B cell (primary cell): ENCODE measurements at regions of chr19 and their contacts with region 1.

Region 1: GRCh38 chr19:56066152-56067023 is 54.7 kb downstream of the ZNF787 start:
- DNase-seq: peak; percentile 77
- ATAC-seq: peak; percentile 67
- H3K4me3 ChIP-seq: peak overlapping the region in 4 of 5 experiments; percentile 2 to 42 (median 36)
- H3K4me3 Mint-ChIP-seq: peak overlapping the region; percentile 71
- H3K27ac ChIP-seq: no peak overlapping the region
- H3K27ac Mint-ChIP-seq: no peak overlapping the region
- H3K4me1 ChIP-seq: peaks cover 9 to 10% of the 10 kb centered on the region in 2 donors
- H3K4me1 Mint-ChIP-seq: peaks cover 11% of the 10 kb centered on the region
- H3K27me3 ChIP-seq: peaks cover 0 to 7% (median 3%) of the 10 kb centered on the region in 4 experiments
- H3K27me3 Mint-ChIP-seq: peaks cover 36% of the 10 kb centered on the region
- CTCF ChIP-seq: peak; percentile 97

Region 2: DNA sequence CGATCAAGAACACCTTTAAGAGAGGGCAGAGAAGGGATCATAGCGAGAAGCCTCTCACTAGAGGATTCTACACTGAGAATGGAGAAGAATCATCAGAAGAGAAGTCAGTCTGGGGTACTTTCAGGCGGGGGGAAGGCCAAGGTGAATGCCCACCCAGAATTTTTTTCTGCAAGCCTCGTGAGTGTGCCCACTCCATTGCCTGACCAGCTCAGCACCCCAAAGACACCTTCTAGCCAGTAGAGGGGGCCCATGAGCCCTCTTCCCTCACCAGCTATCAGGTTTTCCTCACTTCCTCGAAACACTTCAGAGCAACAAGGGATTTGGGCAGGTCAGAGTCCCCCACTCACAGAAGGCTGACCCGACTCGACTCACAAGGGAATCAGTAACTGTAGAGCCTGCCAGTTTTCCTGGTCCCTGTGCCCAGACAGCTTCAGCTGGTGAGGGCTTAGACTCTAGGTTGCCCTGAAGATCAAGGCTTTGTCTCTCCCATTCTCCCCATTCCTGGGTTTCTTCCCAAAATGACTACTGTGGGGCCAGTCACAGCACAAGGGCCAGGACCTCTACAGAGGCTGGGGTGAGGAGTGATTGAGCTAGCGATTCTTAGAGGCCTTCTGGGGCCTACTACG is 152.6 kb before region 1 on chr19:
- CTCF ChIA-PET with region 1: no interaction called
- POLR2A ChIA-PET with region 1: no interaction called
- intact Hi-C with region 1: no loop called
- DNase-seq: no peak
- ATAC-seq: no peak
- H3K4me3 ChIP-seq: no peak overlapping the region
- H3K4me3 Mint-ChIP-seq: no peak overlapping the region
- H3K27ac ChIP-seq: no peak overlapping the region
- H3K27ac Mint-ChIP-seq: no peak overlapping the region
- H3K4me1 ChIP-seq: no peaks in the 10 kb centered on the region
- H3K4me1 Mint-ChIP-seq: no peaks in the 10 kb centered on the region
- H3K27me3 ChIP-seq: peaks cover 0 to 5% (median 0%) of the 10 kb centered on the region in 4 experiments
- H3K27me3 Mint-ChIP-seq: peaks cover 24% of the 10 kb centered on the region
- CTCF ChIP-seq: peak; percentile 9

Region 3: DNA sequence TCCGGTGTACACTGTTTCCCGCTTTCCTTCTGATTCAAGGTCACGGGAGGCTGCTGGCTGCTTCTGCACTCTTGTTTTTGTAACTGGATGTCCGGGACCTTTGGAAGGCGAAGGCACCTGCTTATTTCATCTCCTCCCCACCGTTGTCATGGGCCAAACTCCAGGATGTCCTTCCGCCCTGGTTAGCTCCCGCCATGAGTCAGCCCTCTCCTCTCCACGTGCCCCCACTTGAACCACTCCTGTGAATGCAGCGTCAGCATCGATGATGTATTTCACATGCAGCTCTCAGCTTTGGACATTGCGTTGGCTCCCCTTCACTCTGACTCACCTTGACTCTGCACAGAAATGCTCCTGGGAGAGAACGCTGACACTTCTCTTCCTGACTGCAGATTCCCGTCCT is 103.9 kb after region 1 on chr19:
- CTCF ChIA-PET with region 1: interaction called, 36 read pairs
- POLR2A ChIA-PET with region 1: no interaction called
- intact Hi-C with region 1: no loop called
- DNase-seq: no peak
- ATAC-seq: no peak
- H3K4me3 ChIP-seq: no peak overlapping the region
- H3K4me3 Mint-ChIP-seq: no peak overlapping the region
- H3K27ac ChIP-seq: no peak overlapping the region
- H3K27ac Mint-ChIP-seq: no peak overlapping the region
- H3K4me1 ChIP-seq: peaks cover 2 to 3% of the 10 kb centered on the region in 2 donors
- H3K4me1 Mint-ChIP-seq: peaks cover 2% of the 10 kb centered on the region
- H3K27me3 ChIP-seq: no peaks in the 10 kb centered on the region
- H3K27me3 Mint-ChIP-seq: peaks cover 18% of the 10 kb centered on the region
- CTCF ChIP-seq: no peak

Region 4: DNA sequence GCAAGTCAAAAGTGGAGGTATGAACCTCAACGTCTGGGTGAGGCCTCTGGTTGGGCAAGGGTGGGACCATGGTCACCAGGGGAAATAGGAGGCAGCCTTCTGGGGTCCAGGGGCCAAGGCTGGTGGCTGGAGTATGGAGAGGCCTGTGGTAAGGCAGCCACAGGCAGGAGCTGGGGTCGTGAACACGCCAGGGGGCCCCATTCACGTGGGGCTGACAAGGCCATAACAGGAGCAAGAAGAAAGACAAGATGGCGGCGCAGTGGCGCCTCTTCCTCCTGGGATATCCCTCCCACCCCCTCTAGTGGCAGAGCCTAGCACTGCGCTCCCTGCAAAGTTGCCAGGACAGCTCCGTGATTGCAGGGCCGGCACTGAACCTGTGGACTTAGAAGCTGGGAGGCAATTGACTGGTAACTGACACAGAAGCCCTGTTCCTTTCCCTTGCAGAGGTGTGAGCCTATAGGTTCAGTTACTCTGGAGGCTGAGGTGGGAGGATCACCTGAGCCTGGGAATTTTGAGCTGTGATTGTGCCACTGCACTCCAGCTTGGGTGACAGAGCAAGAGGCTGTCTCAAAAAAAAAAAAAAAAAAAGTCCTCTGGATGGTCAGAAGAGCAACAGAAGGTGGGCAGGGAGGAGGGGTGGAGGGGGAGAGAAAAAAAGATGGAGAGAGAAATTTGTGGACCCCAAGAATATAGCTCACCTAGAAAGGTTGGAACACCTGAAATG is 186.5 kb after region 1 on chr19:
- CTCF ChIA-PET with region 1: interaction called, 25 read pairs
- POLR2A ChIA-PET with region 1: no interaction called
- intact Hi-C with region 1: no loop called
- DNase-seq: peak; percentile 76
- ATAC-seq: peak; percentile 76
- H3K4me3 ChIP-seq: no peak overlapping the region
- H3K4me3 Mint-ChIP-seq: no peak overlapping the region
- H3K27ac ChIP-seq: no peak overlapping the region
- H3K27ac Mint-ChIP-seq: peak overlapping the region; percentile 63
- H3K4me1 ChIP-seq: peaks cover 0 to 2% of the 10 kb centered on the region in 2 donors
- H3K4me1 Mint-ChIP-seq: no peaks in the 10 kb centered on the region
- H3K27me3 ChIP-seq: no peaks in the 10 kb centered on the region
- H3K27me3 Mint-ChIP-seq: no peaks in the 10 kb centered on the region
- CTCF ChIP-seq: peak; percentile 73

Region 5: DNA sequence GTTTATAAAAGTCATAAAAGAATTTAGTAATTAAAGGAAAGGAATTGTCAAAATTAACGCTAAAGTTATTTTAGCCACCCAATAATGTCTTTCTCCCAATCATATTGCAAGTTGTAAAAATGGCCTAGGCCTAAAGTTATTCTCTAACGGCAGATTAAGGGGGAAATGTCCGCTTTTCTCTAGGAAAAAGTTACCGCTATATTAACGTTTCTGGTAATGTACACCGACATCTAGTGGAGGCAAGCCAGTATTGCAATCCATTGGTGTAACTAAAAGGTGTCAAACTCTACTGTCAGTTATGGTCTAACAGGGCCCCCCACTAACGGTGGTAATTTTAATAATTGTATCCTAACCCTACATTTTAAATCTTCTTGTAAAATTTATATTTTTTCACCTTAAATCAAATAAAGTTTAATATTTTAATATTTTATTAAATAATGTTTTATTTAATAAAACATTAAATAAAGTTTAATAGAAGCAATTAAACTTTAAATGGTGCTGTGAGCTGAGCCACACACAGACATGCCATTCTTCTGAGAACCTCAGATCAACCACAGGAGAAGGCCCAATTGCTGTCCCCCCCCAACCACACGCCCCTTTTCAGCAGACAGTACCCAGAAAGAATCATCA is 284.1 kb after region 1 on chr19:
- CTCF ChIA-PET with region 1: interaction called, 16 read pairs
- POLR2A ChIA-PET with region 1: no interaction called
- intact Hi-C with region 1: loop called (anchors 1 kb)
- DNase-seq: peak; percentile 70
- ATAC-seq: peak; percentile 56
- H3K4me3 ChIP-seq: no peak overlapping the region
- H3K4me3 Mint-ChIP-seq: no peak overlapping the region
- H3K27ac ChIP-seq: no peak overlapping the region
- H3K27ac Mint-ChIP-seq: no peak overlapping the region
- H3K4me1 ChIP-seq: no peaks in the 10 kb centered on the region
- H3K4me1 Mint-ChIP-seq: peaks cover 2% of the 10 kb centered on the region
- H3K27me3 ChIP-seq: no peaks in the 10 kb centered on the region
- H3K27me3 Mint-ChIP-seq: no peaks in the 10 kb centered on the region
- CTCF ChIP-seq: peak; percentile 99